PC-3 (cell line): ENCODE measurements at regions of chr4 and their contacts with region 1.

Region 1: GRCh38 chr4:140861359-140862176 is 105.4 kb upstream of the TBC1D9 start:
- DNase-seq: peak; percentile 91
- ATAC-seq: peak; percentile 82
- H3K4me3 ChIP-seq: no peak overlapping the region
- H3K27ac ChIP-seq: no peak overlapping the region
- H3K4me1 ChIP-seq: peaks cover 6% of the 10 kb centered on the region
- H3K27me3 ChIP-seq: peaks cover 42% of the 10 kb centered on the region
- CTCF ChIP-seq: peak; percentile 92

Region 2: GRCh38 chr4:140884431-140885058 is 23.0 kb after region 1 on chr4:
- CTCF ChIA-PET with region 1: no interaction called
- POLR2A ChIA-PET with region 1: no interaction called
- intact Hi-C with region 1: loop called (anchors 1 kb)
- DNase-seq: peak; percentile 79
- ATAC-seq: peak; percentile 87
- H3K4me3 ChIP-seq: no peak overlapping the region
- H3K27ac ChIP-seq: no peak overlapping the region
- H3K4me1 ChIP-seq: no peaks in the 10 kb centered on the region
- H3K27me3 ChIP-seq: peaks cover 23% of the 10 kb centered on the region
- CTCF ChIP-seq: peak; percentile 85

Region 3: DNA sequence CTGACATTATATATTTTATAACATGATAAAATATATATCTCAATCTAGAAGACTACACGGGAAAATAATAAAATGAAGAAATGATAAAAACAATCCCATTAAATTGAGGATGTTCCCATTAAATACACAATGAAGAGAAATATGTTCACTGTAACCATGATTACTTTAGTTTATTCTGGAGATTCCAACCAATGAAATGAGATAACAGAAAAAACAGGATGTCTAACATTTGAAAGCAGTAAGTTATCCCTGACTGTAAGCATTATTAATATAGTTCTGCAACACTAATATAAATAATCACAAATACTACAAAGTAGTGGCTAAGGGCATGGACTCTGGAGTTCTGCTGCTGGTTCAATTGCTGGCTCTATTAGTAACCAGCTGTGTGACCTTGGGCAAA is 102.3 kb after region 1 on chr4:
- CTCF ChIA-PET with region 1: no interaction called
- POLR2A ChIA-PET with region 1: no interaction called
- intact Hi-C with region 1: loop called (anchors 1 kb)
- DNase-seq: no peak
- ATAC-seq: no peak
- H3K4me3 ChIP-seq: no peak overlapping the region
- H3K27ac ChIP-seq: no peak overlapping the region
- H3K4me1 ChIP-seq: no peaks in the 10 kb centered on the region
- H3K27me3 ChIP-seq: 0 out of 2 replicates have a peak, but pooled peaks cover 5% of the 10 kb centered on the region
- CTCF ChIP-seq: no peak

Region 4: DNA sequence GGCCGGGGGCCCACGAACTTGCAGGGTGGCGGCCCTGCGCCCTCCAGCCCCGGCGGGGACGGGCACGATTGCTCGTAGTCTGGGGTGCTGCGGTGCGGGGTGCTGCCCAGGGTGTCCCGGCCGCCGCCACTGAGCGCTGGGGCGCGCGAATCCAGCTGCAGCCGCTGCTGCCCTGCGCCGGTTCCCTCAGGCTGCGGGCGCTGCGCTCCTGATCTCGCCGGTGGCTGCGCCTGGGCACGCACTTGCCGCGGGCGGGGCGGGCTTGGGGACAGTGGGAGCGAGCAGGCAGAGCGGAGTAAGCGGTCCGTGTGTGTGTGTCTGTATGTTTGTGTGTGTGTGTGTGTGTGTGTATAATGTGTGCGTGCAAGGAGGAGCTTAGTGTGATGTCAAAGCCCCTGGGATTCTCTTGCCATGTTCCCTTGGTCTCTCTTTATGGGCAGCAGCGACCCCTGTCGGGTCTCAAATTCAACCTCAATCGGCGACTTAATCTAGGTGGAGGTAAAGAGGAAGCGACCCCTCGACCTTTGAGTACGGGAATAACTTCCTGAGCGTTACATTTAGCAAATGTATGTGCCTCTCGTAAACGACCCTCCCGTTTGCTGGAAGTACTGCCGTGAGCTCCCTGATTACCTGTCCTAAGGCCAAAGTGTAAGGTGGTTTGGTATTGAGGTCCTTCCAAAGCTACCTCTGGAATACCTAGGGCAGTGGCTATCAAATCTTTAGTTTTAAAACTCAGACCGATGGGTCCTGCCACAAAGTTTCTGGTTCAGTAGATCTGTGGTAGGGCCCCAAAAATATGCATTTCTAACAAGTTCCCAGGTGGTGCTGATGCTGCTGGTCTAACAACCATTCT is 271.8 kb after region 1 on chr4 and contains the start of gene RNF150:
- CTCF ChIA-PET with region 1: interaction called, 3 read pairs
- POLR2A ChIA-PET with region 1: no interaction called
- intact Hi-C with region 1: loop called (anchors 1 kb)
- DNase-seq: peak; percentile 79
- ATAC-seq: peak; percentile 75
- H3K4me3 ChIP-seq: peak within 1 kb of the TSS; percentile 78
- H3K27ac ChIP-seq: no peak within 1 kb of the TSS
- H3K4me1 ChIP-seq: peaks cover 4% of the 10 kb centered on the region; the same call in 1 of the 2 replicates
- H3K27me3 ChIP-seq: peaks cover 91% of the 10 kb centered on the region
- CTCF ChIP-seq: peak; percentile 88
- total RNA-seq, gene RNF150: 0.55 and 0.58 TPM in 2 replicates

Region 5: DNA sequence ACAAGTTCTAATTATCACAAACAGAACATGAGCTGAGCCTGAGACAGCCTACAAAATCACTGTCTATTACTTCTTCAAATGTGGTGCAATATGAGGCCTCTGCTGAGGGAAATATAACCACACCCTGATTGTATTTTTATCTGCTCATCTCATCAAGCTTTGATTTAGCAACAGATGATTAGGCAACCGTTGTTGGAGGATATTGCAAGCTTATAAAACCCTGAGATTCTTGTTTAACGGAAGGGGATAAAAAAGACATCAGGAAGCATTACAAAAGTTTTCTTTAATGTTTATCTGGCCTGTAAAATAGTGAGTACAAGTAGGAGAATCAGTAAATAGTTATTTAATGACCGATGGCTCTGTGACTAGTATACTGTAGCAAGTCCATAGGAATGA is 467.6 kb after region 1 on chr4:
- CTCF ChIA-PET with region 1: no interaction called
- POLR2A ChIA-PET with region 1: no interaction called
- intact Hi-C with region 1: no loop called
- DNase-seq: peak; percentile 95
- ATAC-seq: peak; percentile 94
- H3K4me3 ChIP-seq: peak overlapping the region; percentile 36; the same call in 1 of the 2 replicates
- H3K27ac ChIP-seq: peak overlapping the region; percentile 89
- H3K4me1 ChIP-seq: peaks cover 38% of the 10 kb centered on the region
- H3K27me3 ChIP-seq: no peaks in the 10 kb centered on the region
- CTCF ChIP-seq: no peak